ENCODE measurements at regions of chr18 and their contacts with region 1.

Region 1: GRCh38 chr18:63848159-63848558 is 39.3 kb upstream of the SERPINB2 start:
- DNase-seq: no peak
- ATAC-seq: no peak
- H3K4me3 ChIP-seq: no peak overlapping the region
- H3K27ac ChIP-seq: no peak overlapping the region
- H3K4me1 ChIP-seq: no peaks in the 10 kb centered on the region
- H3K27me3 ChIP-seq: no peaks in the 10 kb centered on the region
- CTCF ChIP-seq: peak; percentile 13

Region 2: GRCh38 chr18:63523660-63524059 is 324.5 kb before region 1 on chr18:
- intact Hi-C with region 1: loop called (anchors 5 to 10 kb)
- DNase-seq: no peak
- ATAC-seq: no peak
- H3K4me3 ChIP-seq: no peak overlapping the region
- H3K27ac ChIP-seq: no peak overlapping the region
- H3K4me1 ChIP-seq: no peaks in the 10 kb centered on the region
- H3K27me3 ChIP-seq: no peaks in the 10 kb centered on the region
- CTCF ChIP-seq: no peak

Region 3: DNA sequence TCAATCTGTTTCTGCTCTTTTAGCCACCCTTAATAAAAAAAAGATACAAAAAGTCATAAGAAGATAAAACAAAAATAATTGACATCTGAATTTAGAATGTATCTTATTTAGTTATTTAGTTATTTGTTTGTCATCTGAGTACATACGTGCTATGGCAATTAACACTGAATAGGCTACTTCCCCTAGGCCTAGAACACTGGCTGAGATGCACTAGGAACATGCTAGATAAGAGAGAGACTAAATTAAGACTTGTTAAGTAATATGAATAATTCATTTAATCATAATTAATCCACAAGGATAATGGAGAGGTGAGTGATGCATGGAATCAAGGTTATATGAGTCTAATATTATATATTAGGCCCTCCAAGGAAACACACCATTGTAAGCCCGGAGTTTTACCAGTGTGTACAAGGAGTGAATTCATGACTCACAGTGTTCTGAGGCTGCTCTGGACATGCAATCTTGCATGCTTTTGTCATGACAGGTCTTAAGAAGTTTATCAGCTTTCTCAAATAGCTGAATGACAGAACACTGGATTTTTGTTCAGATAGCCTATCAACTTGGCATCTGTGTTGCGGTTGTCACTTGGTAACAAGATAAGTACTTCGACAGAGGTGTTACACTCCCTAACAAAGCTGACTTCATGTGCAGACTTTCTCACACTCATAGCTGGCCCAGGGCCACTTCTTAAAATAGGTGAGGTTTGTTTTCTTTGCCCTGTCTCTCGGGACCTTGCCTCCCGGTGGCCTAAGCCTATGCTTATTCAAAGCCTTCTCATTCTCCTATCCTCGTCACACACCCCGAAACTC is 34.4 kb after region 1 on chr18:
- intact Hi-C with region 1: no loop called
- DNase-seq: no peak
- ATAC-seq: peak; percentile 40 to 84 (median 67)
- H3K4me3 ChIP-seq: no peak overlapping the region
- H3K27ac ChIP-seq: no peak overlapping the region
- H3K4me1 ChIP-seq: no peaks in the 10 kb centered on the region
- H3K27me3 ChIP-seq: peaks cover 0 to 3% (median 0%) of the 10 kb centered on the region in 3 donors
- CTCF ChIP-seq: no peak

Region 4: GRCh38 chr18:63907664-63908063 is 59.5 kb after region 1 on chr18 and contains the start of gene SERPINB10:
- intact Hi-C with region 1: no loop called
- DNase-seq: no peak
- ATAC-seq: no peak
- H3K4me3 ChIP-seq: no peak within 1 kb of the TSS
- H3K27ac ChIP-seq: no peak within 1 kb of the TSS
- H3K4me1 ChIP-seq: no peaks in the 10 kb centered on the region
- H3K27me3 ChIP-seq: peaks cover 0 to 2% (median 0%) of the 10 kb centered on the region in 3 donors
- CTCF ChIP-seq: no peak
- total RNA-seq, gene SERPINB10: 0.39 TPM in 1 of 4 donors, not detected in the others

Region 5: DNA sequence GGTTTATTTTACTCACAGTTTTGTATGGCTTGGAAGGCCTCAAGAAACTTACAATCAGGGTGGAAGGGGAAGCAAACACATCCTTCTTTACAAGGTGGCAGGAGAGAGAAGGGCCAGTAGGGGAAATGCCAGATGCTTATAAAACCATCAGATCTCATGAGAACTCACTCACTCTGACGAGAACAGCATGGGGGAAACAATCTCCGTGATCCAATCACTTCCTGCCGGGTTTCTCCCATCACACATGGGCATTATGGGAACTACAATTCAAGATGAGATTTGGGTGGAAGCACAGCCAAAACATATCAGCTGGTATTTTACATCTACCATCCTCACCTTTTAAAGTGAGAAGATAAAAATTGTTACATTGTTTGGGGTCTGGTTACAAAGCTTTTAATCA is 1474.7 kb after region 1 on chr18:
- intact Hi-C with region 1: no loop called
- DNase-seq: no peak
- ATAC-seq: no peak
- H3K4me3 ChIP-seq: no peak overlapping the region
- H3K27ac ChIP-seq: no peak overlapping the region
- H3K4me1 ChIP-seq: no peaks in the 10 kb centered on the region
- H3K27me3 ChIP-seq: no peaks in the 10 kb centered on the region
- CTCF ChIP-seq: no peak